Breast epithelium (tissue), 4 donors: ENCODE measurements at regions of chr16 and their contacts with region 1.

Region 1: DNA sequence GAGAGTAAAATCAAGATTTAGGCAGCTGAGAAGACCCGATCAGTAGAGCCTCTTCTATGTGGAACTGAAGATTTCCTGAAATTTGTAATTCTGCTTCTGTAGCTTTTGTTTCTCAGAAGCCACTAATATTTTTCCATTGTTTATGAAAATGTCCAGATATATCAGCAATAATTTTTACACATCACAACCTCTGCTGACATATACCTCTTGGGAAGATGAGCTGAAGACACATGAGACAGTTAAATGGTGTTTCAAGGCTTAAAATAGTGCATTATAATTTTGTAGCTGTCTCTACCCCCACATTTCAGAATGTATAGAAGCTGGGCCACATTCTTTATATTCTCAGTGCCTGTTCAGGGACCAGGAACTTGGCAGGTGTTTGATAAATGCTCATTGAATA is 320.6 kb downstream of the HS3ST4 start:
- DNase-seq: no peak
- H3K4me3 ChIP-seq: no peak overlapping the region
- H3K27ac ChIP-seq: no peak overlapping the region
- H3K4me1 ChIP-seq: no peaks in the 10 kb centered on the region
- H3K27me3 ChIP-seq: no peaks in the 10 kb centered on the region
- CTCF ChIP-seq: no peak
- POLR2A ChIP-seq: no peak

Region 2: GRCh38 chr16:25950586-25951281 is 61.6 kb before region 1 on chr16:
- intact Hi-C with region 1: loop called (anchors 2 kb)
- DNase-seq: no peak
- H3K4me3 ChIP-seq: no peak overlapping the region
- H3K27ac ChIP-seq: no peak overlapping the region
- H3K4me1 ChIP-seq: no peaks in the 10 kb centered on the region
- H3K27me3 ChIP-seq: no peaks in the 10 kb centered on the region
- CTCF ChIP-seq: no peak
- POLR2A ChIP-seq: no peak

Region 3: DNA sequence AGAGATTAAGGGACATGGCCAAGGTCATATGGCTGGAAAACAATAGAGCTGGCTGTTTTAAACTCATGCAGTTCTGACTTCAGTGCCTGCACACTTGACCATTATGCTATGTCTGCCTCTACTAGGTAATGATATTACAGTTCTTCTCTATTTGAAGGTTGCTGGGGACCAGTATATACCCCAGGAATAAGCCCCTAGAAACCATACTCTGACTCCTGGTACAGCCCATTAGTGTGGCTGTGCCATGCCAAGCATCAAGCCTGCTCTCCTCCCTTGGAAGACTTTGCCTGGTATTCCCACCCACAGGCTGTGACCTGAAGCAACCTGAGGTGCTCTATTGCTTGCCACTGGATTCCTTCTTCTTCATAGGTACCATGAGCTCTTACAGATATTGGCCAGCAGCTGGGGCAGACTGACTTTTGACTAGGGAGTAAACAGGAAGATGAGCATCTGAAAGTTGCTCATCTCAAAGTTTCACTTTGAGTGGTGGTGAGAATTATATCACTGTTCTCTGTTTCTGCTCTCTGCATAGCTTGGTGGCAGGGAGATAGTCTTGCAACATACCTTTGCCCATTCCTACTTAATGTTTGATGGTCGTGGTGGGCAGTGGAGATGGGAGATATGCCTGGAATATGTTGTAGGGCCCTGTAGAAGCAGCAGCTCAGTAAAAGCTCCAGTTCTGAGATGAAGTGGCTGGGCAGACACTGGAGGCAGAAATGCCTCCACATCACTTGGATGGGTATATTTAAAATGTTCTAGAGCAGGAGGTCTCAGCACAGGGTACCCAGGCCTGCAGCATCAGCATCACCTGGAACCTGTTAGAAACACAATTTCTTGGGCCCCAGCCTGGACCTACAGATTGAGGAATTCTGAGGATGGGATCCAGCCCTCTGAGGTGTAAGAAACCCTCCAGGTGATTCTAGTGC is 45.9 kb before region 1 on chr16:
- intact Hi-C with region 1: no loop called
- DNase-seq: no peak
- H3K4me3 ChIP-seq: no peak overlapping the region
- H3K27ac ChIP-seq: no peak overlapping the region
- H3K4me1 ChIP-seq: no peaks in the 10 kb centered on the region
- H3K27me3 ChIP-seq: no peaks in the 10 kb centered on the region
- CTCF ChIP-seq: no peak
- POLR2A ChIP-seq: no peak

Region 4: DNA sequence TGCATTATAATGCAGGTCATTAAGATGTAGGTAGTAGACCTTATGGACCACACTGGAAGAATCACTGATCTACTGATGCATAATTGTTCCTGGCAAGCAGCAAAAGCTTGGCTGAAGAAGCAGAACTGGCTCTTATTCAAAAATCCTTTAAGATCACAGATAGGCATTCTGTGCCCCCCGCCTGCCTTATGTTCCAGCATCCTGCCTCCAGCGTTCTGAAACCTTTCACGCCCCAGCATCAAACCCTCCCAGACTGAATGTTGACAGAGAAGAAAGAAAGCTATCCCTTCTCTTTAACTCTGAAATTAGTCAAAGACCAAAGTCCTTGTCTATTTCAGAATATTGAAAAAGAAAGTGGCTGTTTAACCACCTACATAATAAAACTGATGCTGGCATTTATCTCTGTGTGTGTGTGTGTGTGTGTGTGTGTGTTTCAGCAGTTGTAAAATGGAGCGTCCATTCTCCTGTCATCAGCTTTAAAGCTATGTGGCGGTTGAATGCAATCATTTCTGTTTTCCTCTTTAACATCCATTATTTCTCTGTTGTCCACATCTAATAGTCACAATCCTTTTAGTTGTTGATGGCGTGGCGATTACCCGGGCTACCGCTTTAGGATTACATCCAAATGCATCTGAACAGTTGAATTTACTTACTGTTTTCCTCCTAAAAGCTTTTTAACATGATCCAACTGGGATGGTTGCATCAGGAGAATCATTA is 29.7 kb after region 1 on chr16:
- intact Hi-C with region 1: no loop called
- DNase-seq: no peak
- H3K4me3 ChIP-seq: no peak overlapping the region
- H3K27ac ChIP-seq: no peak overlapping the region
- H3K4me1 ChIP-seq: no peaks in the 10 kb centered on the region
- H3K27me3 ChIP-seq: no peaks in the 10 kb centered on the region
- CTCF ChIP-seq: no peak
- POLR2A ChIP-seq: no peak

Region 5: DNA sequence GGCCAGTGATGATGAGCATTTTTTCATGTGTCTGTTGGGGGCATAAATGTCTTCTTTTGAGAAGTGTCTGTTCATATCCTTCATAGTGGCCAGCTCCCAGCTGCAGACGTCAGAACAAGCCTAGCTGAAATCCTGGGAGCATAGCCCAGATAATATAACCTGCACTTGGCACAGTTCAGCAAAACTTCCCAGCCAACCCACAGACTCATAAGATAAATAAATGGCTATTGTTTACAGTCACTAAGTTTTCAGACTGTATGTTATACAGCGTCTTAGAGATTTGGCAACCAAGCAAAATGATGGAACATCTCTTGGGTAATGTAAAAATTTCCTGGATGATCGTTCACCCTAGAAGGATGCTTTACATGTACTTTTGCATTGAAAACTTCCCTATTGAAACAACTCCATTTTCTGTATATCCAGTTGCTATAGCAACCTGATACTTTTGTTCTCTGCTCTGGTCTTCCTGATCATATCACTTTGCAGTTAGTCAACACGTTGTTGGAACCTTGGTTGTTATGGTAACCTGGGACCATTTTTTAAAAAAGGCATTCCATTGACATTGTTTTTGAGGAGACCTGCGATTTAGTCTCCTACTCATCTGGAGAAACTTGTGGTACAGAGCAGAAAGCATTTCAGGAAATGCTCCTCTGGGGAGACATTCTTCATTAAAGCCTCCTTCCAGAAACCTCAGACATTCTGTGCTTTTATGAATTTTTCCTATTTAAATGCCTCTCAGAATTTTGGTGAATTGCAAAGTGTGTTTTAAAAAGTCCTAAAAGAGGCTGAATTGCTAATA is 58.1 kb after region 1 on chr16:
- intact Hi-C with region 1: no loop called
- DNase-seq: no peak
- H3K4me3 ChIP-seq: no peak overlapping the region
- H3K27ac ChIP-seq: no peak overlapping the region
- H3K4me1 ChIP-seq: no peaks in the 10 kb centered on the region
- H3K27me3 ChIP-seq: no peaks in the 10 kb centered on the region
- CTCF ChIP-seq: no peak
- POLR2A ChIP-seq: no peak

Region 6: DNA sequence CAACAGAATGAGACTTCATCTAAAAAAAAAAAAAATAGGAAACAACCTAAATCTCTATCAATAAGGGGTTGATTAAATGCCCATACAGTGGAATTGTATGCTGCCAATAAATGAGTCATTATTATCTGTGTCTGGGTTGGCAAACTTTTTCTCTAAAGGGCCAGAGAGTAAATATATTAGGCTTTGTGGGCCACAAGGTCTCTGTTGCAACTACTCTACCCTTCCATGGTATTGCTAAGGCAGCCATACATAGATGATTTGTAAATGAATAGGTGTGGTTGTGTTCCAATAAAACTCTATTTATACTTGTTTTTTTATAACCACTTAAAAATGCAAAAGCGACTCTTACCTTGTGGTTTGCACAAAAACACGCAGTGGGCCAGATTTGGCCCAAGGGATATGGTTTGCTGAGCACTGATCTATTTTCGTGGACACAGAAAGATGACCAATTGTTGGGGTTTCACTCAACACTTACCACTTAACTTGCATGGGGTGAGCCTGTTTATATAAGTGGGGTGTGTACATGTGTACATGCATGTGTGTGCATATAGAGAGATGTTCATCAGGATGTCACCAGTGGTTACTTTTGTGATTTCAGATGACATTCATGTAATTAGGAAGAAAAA is 1289.0 kb after region 1 on chr16:
- intact Hi-C with region 1: no loop called
- DNase-seq: no peak
- H3K4me3 ChIP-seq: no peak overlapping the region
- H3K27ac ChIP-seq: no peak overlapping the region
- H3K4me1 ChIP-seq: no peaks in the 10 kb centered on the region
- H3K27me3 ChIP-seq: no peaks in the 10 kb centered on the region
- CTCF ChIP-seq: no peak
- POLR2A ChIP-seq: no peak